ENCODE measurements at regions of chr4 and their contacts with region 1.

Region 1: GRCh38 chr4:109389369-109390114 is 44.1 kb upstream of the SEC24B start:
- DNase-seq: peak; percentile 7
- H3K4me3 ChIP-seq: 0 out of 4 replicates have a peak overlapping the region, but pooled peaks of 1 of the 2 experiments have one; percentile 12
- H3K27ac ChIP-seq: no peak overlapping the region
- H3K4me1 ChIP-seq: no peaks in the 10 kb centered on the region; a peak in 1 of 4 replicates
- H3K27me3 ChIP-seq: no peaks in the 10 kb centered on the region; the same call in 1 of the 2 replicates
- CTCF ChIP-seq: no peak
- EP300 ChIP-seq: no peak
- RAD21 ChIP-seq: no peak

Region 2: DNA sequence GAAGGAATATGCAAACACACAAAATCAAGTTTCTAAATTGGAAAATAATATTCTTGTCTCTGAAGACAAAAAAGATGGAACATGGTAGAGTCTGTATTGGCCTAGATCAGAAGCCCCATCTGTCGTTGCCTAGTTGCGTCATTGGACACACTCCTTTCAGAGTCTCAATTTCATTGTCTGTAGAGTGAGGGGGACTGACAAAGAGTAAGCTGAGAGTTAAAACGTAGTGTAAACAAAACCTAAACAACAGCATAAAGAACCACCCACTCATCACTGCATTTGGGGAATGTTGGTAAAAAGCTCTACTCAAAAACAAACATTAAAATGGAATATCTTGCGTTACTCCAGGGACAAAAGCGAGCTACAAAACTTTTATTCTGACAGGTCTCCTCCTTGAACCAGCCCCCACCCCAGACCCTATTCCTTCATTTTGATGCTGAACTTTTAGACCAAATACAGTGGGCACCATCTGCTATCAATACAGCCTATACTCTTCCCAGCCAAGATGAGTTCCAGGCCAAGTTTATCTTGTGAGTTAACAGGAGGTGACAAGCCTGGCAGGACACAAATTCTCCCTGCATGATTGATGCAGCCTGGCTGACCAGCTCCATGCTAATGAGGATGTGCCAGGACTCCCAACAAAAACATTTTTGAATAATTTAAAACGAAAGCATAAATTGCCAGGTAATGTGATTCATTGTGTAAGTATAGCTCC is 212.3 kb before region 1 on chr4:
- CTCF ChIA-PET with region 1: no interaction called
- POLR2A ChIA-PET with region 1: no interaction called
- DNase-seq: no peak
- H3K4me3 ChIP-seq: no peak overlapping the region
- H3K27ac ChIP-seq: no peak overlapping the region
- H3K4me1 ChIP-seq: no peaks in the 10 kb centered on the region
- H3K27me3 ChIP-seq: no peaks in the 10 kb centered on the region
- CTCF ChIP-seq: no peak
- EP300 ChIP-seq: no peak
- RAD21 ChIP-seq: no peak

Region 3: GRCh38 chr4:109207060-109207459 is 182.5 kb before region 1 on chr4:
- CTCF ChIA-PET with region 1: no interaction called
- POLR2A ChIA-PET with region 1: no interaction called
- DNase-seq: peak; percentile 0
- H3K4me3 ChIP-seq: no peak overlapping the region
- H3K27ac ChIP-seq: no peak overlapping the region
- H3K4me1 ChIP-seq: no peaks in the 10 kb centered on the region
- H3K27me3 ChIP-seq: peaks cover 4% of the 10 kb centered on the region; the same call in 1 of the 2 replicates
- CTCF ChIP-seq: no peak
- EP300 ChIP-seq: no peak
- RAD21 ChIP-seq: no peak

Region 4: DNA sequence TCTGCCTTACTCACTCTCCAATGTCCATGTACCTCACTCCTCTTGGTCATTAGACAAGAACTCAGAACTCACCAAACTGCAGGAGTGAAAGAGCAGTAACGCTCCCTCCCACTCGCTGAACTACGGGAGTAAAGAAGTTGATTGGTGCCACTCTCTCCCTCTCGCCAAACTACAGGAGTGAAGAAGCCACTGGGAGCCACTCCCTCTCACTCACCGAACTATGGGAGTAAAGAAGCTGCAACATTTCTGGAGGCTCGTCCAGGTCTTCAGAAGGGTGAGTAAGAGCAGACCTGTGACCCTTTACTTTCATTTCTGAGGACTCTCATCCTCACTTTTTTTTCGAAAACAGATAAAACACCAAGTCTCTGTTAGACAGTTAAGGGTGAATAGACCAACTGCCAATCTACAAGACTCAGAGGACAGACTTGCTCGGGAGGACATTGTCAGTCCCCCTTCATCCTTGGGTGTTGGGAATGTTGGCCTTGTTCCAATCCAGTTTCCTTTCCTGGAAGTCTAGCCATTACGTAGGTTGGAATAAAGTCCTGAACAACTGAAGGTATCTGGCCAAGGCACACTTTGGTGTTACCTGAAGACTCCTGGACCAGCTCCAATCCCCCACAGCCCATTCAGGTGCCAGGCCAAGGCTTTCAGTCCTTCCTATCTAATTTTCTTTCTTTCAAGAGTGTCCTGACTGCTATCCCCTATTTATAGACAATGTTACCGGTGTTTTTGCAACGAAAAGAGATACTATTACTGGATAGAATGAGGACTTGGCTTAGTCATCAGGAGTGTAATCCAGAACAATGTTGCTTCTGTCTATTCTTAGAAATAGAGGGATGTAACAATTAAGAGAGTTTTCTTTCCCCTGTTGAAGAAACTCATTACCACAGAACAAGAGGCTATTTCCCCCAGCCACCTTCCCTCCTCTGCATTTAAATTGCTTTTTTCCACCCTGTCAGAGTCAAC is 76.1 kb before region 1 on chr4:
- CTCF ChIA-PET with region 1: no interaction called
- POLR2A ChIA-PET with region 1: no interaction called
- DNase-seq: no peak
- H3K4me3 ChIP-seq: no peak overlapping the region
- H3K27ac ChIP-seq: no peak overlapping the region
- H3K4me1 ChIP-seq: no peaks in the 10 kb centered on the region
- H3K27me3 ChIP-seq: no peaks in the 10 kb centered on the region
- CTCF ChIP-seq: no peak
- EP300 ChIP-seq: no peak
- RAD21 ChIP-seq: no peak

Region 5: DNA sequence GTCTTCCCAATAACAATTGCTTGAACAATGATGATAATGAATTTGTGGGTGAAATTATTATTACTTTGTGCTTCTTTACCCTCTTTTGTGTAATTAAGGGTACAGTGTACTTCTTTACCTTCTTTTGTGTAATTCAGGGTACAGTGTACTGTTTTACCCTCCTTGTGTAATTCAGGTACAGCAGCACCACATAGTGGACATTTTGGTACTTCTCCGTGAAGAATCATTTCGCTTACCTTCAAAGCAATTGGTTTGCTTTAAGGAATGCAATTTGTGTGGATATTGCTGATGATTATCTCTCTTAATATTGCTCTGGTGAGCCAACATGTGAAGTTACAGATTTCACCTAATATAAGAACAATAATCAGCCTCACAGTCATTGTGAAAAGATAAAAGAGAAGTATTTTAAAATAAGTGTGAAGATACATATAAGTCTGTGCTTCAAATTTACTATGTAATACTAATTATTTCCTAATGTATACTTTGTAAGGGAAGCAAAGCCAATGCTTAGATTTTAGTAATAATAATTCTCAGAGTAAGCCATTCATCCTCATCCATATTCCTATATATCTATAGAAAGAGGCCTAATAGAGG is 16.9 kb after region 1 on chr4:
- CTCF ChIA-PET with region 1: interaction called, 10 read pairs
- POLR2A ChIA-PET with region 1: no interaction called
- DNase-seq: peak; percentile 29
- H3K4me3 ChIP-seq: peak overlapping the region in 1 of 2 experiments; percentile 14; a peak in 1 of 4 replicates
- H3K27ac ChIP-seq: no peak overlapping the region
- H3K4me1 ChIP-seq: no peaks in the 10 kb centered on the region
- H3K27me3 ChIP-seq: peaks cover 8% of the 10 kb centered on the region; the same call in 1 of the 2 replicates
- CTCF ChIP-seq: peak; percentile 80
- EP300 ChIP-seq: no peak
- RAD21 ChIP-seq: peak; percentile 81